Heart right ventricle (tissue), 16 donors: ENCODE measurements at regions of chr5 and their contacts with region 1.

Region 1: DNA sequence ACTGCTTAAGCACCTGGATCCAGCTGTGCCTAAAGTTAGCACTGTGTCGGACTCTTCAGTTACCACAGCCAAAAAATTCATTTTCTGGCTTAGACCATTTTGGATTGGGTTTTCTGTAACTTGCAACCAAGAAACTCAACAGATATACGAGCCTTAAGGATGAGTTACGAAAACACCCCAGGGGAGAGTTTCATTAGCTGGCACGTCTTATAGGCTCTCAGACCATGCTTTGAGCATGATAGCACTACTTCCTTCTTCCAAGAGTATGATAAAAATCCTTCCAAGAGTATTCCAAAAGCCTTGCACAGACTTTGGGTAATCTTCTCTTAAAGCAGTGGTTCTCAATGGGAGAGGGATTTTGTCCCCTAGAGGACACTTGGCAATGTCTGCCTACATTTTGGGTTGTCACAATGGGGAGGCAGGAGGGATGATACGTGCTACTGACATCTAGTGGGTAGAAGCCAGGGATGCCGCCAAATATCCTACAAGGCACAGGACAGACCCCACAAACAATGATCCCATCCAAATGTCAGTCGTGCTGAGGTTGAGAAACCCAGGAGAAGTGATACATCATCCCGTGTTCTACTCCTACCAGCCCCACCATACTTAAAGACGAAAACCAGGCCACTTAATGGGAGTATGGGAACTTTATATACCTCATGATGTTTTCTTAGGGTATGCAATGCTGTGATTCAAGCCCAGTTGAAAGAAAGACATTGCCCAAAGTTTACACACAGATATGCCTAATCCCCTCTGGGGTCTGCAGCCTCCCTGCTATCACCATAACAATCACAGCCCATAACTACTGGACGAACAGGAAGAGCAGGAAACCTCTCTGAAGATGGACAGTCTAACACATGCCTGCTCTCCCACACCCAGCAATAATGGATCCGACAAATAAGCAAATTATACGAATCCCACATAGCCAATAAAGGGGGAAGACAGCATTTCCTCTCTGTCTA is 65.0 kb downstream of the SMIM23 start:
- DNase-seq: no peak
- ATAC-seq: peak in 5 of 8 donors; percentile 10 to 46 (median 15)
- H3K4me3 ChIP-seq: no peak overlapping the region
- H3K27ac ChIP-seq: peak overlapping the region in 2 of 10 donors; percentile 29 to 35
- H3K4me1 ChIP-seq: peaks cover 0 to 22% (median 9%) of the 10 kb centered on the region in 9 donors
- H3K27me3 ChIP-seq: no peaks in the 10 kb centered on the region
- CTCF ChIP-seq: peak in 6 of 9 donors; percentile 17 to 42 (median 22)

Region 2: GRCh38 chr5:171644536-171644935 is 206.1 kb before region 1 on chr5:
- intact Hi-C with region 1: loop called in 3 of 10 experiments (anchors 5 to 10 kb)
- DNase-seq: peak in 1 of 2 donors; percentile 22
- ATAC-seq: no peak
- H3K4me3 ChIP-seq: no peak overlapping the region
- H3K27ac ChIP-seq: no peak overlapping the region
- H3K4me1 ChIP-seq: peaks cover 0 to 26% (median 13%) of the 10 kb centered on the region in 9 donors
- H3K27me3 ChIP-seq: no peaks in the 10 kb centered on the region
- CTCF ChIP-seq: no peak

Region 3: DNA sequence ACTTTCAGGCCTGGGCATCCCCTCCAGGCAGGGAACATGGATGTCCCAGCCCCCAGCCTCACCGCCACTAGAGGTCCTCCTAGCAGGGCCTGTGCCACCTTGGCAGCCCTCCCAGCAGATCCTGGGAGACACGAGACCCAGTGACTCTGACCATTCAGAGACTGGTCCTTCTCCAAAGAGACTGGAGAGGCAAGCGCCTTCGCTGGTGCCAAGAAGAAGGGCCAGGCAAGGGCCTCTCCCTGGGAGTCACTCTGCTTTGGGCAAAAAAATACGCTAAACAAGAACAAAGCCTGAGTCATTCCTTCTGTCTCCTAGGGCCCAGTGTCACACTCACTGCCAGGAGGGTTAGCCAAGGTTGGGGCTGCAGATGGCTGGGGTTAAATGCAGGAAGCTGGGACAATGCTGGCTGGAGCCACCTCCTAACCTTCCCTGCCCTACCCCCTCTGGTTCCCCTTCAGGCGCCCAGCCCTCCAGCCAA is 100.3 kb before region 1 on chr5:
- intact Hi-C with region 1: loop called in 1 of 10 experiments (anchors 10 kb)
- DNase-seq: peak; percentile 44 to 59
- ATAC-seq: peak; percentile 52 to 81 (median 72)
- H3K4me3 ChIP-seq: no peak overlapping the region
- H3K27ac ChIP-seq: peak overlapping the region in 3 of 10 donors; percentile 11 to 33 (median 31)
- H3K4me1 ChIP-seq: peaks cover 0 to 33% (median 18%) of the 10 kb centered on the region in 9 donors
- H3K27me3 ChIP-seq: no peaks in the 10 kb centered on the region
- CTCF ChIP-seq: peak in 7 of 9 donors; percentile 19 to 39 (median 30)